Heart left ventricle (tissue), 16 donors: ENCODE measurements at regions of chr20 and their contacts with region 1.

Region 1: GRCh38 chr20:10673988-10674711 is at the start of gene JAG1:
- DNase-seq: peak; percentile 94 to 98 (median 96)
- ATAC-seq: peak; percentile 88 to 90 (median 89)
- H3K4me3 ChIP-seq: peak within 1 kb of the TSS; percentile 73 to 98 (median 91)
- H3K27ac ChIP-seq: peak within 1 kb of the TSS; percentile 91 to 99 (median 98)
- H3K4me1 ChIP-seq: peaks cover 0 to 27% (median 12%) of the 10 kb centered on the region in 12 donors
- H3K27me3 ChIP-seq: no peaks in the 10 kb centered on the region
- CTCF ChIP-seq: no peak
- POLR2A ChIP-seq: peak; percentile 28 to 59
- total RNA-seq, gene JAG1: 20.9 to 42.6 (median 29.6) TPM

Region 2: GRCh38 chr20:10171864-10172751 is 502.0 kb before region 1 on chr20:
- intact Hi-C with region 1: no loop called
- DNase-seq: peak in 3 of 5 donors; percentile 22 to 67 (median 33)
- ATAC-seq: peak in 3 of 4 donors; percentile 26 to 67 (median 61)
- H3K4me3 ChIP-seq: peak overlapping the region; percentile 1 to 48 (median 38)
- H3K27ac ChIP-seq: no peak overlapping the region
- H3K4me1 ChIP-seq: peaks cover 0 to 13% (median 0%) of the 10 kb centered on the region in 12 donors
- H3K27me3 ChIP-seq: peaks cover 0 to 26% (median 6%) of the 10 kb centered on the region in 9 donors
- CTCF ChIP-seq: no peak
- POLR2A ChIP-seq: no peak

Region 3: GRCh38 chr20:10469599-10469998 is 204.6 kb before region 1 on chr20:
- intact Hi-C with region 1: loop called in 5 of 10 experiments (anchors 5 to 10 kb)
- DNase-seq: peak in 3 of 5 donors; percentile 43 to 48 (median 44)
- ATAC-seq: peak; percentile 72 to 82 (median 80)
- H3K4me3 ChIP-seq: no peak overlapping the region
- H3K27ac ChIP-seq: peak overlapping the region in 1 of 12 donors; percentile 50
- H3K4me1 ChIP-seq: peaks cover 0 to 62% (median 34%) of the 10 kb centered on the region in 12 donors
- H3K27me3 ChIP-seq: no peaks in the 10 kb centered on the region
- CTCF ChIP-seq: peak; percentile 49 to 80 (median 68)
- POLR2A ChIP-seq: no peak

Region 4: DNA sequence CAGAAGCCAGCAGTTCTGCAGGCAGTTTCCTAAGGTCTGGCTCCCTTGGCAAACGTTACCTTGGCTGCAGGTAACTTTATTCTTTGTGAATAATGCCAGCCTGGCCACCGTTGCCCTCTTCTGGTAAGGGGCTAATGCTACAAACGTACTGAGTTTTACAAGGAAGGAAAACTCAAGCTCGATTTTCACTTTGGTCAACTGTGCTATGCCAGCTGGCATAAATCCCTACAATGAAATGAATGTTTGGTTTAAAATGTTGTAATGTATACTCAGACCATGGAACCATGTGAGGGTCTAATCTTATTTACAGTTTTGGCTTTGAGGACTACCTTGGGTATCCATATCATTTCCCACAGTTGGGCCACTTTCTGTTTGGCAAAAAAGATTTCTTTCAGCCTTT is 137.6 kb before region 1 on chr20:
- intact Hi-C with region 1: no loop called
- DNase-seq: no peak
- ATAC-seq: no peak
- H3K4me3 ChIP-seq: no peak overlapping the region
- H3K27ac ChIP-seq: no peak overlapping the region
- H3K4me1 ChIP-seq: peaks cover 0 to 15% (median 5%) of the 10 kb centered on the region in 12 donors
- H3K27me3 ChIP-seq: no peaks in the 10 kb centered on the region
- CTCF ChIP-seq: peak in 6 of 12 donors; percentile 15 to 39 (median 36)
- POLR2A ChIP-seq: no peak

Region 5: GRCh38 chr20:10611357-10611756 is 62.8 kb before region 1 on chr20:
- intact Hi-C with region 1: loop called in 1 of 10 experiments (anchors 5 kb)
- DNase-seq: peak; percentile 58 to 72 (median 69)
- ATAC-seq: peak in 3 of 4 donors; percentile 65 to 72 (median 66)
- H3K4me3 ChIP-seq: no peak overlapping the region
- H3K27ac ChIP-seq: peak overlapping the region in 6 of 12 donors; percentile 22 to 92 (median 74)
- H3K4me1 ChIP-seq: peaks cover 0 to 32% (median 6%) of the 10 kb centered on the region in 12 donors
- H3K27me3 ChIP-seq: no peaks in the 10 kb centered on the region
- CTCF ChIP-seq: peak; percentile 32 to 69 (median 50)
- POLR2A ChIP-seq: no peak

Region 6: GRCh38 chr20:10747019-10747418 is 72.9 kb after region 1 on chr20:
- intact Hi-C with region 1: loop called in 4 of 10 experiments (anchors 5 to 10 kb)
- DNase-seq: peak in 2 of 5 donors; percentile 20 to 26
- ATAC-seq: peak; percentile 47 to 80 (median 56)
- H3K4me3 ChIP-seq: peak overlapping the region in 1 of 12 donors; percentile 10
- H3K27ac ChIP-seq: peak overlapping the region; percentile 12 to 81 (median 61)
- H3K4me1 ChIP-seq: peaks cover 0 to 33% (median 6%) of the 10 kb centered on the region in 12 donors
- H3K27me3 ChIP-seq: no peaks in the 10 kb centered on the region
- CTCF ChIP-seq: no peak
- POLR2A ChIP-seq: no peak

Region 7: DNA sequence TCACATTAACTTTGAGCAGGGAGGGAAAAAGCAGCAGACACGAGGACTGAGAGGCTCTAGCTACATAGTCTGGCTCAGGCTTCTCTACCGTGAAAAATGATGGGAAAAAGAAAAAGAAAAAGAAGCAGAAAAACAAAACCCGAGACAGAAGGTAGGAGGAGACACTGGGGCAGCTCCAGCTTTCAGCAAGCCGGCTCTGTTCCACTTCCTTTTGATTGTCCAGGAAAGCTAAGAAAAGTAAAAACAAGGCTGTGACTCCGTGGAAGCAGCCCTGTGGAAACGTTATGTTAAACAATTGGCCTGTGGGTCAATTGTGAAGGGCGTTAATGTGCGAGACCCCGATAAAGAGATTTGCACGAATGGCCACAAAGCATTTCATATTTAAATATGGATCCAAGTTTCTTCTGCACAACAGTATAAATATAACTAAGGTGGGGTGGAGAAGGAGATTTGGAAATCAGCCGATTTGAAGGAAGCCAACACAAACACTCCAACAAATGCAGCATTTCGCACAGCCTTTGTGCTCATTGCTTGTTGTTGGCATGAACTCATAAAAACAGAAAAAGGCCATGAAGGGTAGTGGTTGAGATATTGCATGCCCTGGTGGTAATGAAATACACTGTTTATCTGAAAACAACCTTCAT is 236.5 kb after region 1 on chr20:
- intact Hi-C with region 1: loop called in 2 of 10 experiments (anchors 2 kb)
- DNase-seq: peak in 3 of 5 donors; percentile 26 to 46 (median 36)
- ATAC-seq: peak; percentile 60 to 84 (median 74)
- H3K4me3 ChIP-seq: peak overlapping the region in 6 of 12 donors; percentile 1 to 28 (median 22)
- H3K27ac ChIP-seq: peak overlapping the region; percentile 29 to 80 (median 54)
- H3K4me1 ChIP-seq: peaks cover 0 to 23% (median 3%) of the 10 kb centered on the region in 12 donors
- H3K27me3 ChIP-seq: no peaks in the 10 kb centered on the region
- CTCF ChIP-seq: peak in 8 of 12 donors; percentile 2 to 57 (median 32)
- POLR2A ChIP-seq: no peak

Region 8: DNA sequence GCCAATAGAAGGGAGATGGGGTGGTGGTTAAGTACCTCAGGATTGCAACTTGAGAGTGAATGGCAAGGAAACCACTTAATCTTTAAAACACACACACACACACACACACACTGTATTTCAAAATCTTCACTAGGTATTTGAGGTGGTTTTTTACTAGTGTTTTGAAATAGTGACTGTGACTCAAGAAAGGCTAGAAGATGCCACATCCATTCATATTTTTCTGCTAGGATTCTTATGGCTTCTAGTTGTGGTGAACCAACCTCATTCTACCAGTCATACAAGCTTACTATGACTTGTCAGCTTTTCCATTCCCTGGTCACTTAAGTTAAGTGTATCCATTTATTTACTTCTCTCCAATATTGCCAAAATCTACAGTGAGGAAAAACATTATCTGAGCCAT is 519.1 kb after region 1 on chr20:
- intact Hi-C with region 1: no loop called
- DNase-seq: no peak
- ATAC-seq: no peak
- H3K4me3 ChIP-seq: no peak overlapping the region
- H3K27ac ChIP-seq: no peak overlapping the region
- H3K4me1 ChIP-seq: peaks cover 0 to 23% (median 9%) of the 10 kb centered on the region in 12 donors
- H3K27me3 ChIP-seq: no peaks in the 10 kb centered on the region
- CTCF ChIP-seq: no peak
- POLR2A ChIP-seq: no peak

Region 9: DNA sequence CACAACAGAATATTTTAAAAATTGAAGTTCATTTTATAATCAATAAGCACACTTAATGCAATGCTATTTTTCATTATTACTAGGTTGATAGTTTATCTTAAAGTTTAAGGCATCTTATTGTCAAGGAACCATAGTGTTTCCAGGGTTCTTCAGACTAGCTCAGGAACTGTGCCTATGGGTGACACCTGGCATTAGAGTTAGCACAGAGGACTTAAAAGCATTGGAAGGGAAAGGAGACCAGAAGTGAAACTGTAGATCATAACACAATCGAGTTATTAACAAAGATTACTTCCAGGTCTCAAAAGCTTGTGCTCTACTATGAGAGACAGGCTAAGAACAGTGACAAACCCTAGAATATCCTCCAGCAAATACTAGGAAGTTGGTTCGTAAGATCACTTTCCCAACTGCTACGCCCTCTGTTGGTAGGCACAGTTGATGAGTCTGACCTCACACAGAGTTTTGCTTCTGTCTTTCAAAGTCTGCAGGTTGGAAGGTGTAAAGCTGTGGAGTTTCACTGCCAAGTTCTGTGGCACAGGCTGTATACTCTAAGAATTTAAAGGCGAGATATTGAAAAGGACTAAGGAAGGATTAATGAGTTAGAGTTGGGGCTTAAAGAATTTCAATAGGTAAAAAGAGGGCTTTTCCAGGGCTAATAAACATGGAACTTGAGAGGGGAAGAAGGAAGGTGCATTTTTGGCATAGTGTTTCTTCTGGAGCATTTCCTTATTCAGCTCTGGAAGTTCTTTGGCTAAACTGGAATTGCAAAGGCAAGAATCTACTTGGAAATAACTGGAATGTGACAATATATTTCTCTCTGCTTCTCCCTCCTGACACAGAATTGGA is 531.0 kb after region 1 on chr20:
- intact Hi-C with region 1: loop called (anchors 1 to 10 kb)
- DNase-seq: peak in 4 of 5 donors; percentile 56 to 72 (median 68)
- ATAC-seq: peak; percentile 82 to 95 (median 93)
- H3K4me3 ChIP-seq: no peak overlapping the region
- H3K27ac ChIP-seq: peak overlapping the region in 5 of 12 donors; percentile 15 to 46 (median 39)
- H3K4me1 ChIP-seq: peaks cover 0 to 17% (median 7%) of the 10 kb centered on the region in 12 donors
- H3K27me3 ChIP-seq: no peaks in the 10 kb centered on the region
- CTCF ChIP-seq: peak; percentile 65 to 91 (median 83)
- POLR2A ChIP-seq: no peak